CD8-positive, alpha-beta T cell (primary cell): ENCODE measurements at regions of chrX and their contacts with region 1.

Region 1: DNA sequence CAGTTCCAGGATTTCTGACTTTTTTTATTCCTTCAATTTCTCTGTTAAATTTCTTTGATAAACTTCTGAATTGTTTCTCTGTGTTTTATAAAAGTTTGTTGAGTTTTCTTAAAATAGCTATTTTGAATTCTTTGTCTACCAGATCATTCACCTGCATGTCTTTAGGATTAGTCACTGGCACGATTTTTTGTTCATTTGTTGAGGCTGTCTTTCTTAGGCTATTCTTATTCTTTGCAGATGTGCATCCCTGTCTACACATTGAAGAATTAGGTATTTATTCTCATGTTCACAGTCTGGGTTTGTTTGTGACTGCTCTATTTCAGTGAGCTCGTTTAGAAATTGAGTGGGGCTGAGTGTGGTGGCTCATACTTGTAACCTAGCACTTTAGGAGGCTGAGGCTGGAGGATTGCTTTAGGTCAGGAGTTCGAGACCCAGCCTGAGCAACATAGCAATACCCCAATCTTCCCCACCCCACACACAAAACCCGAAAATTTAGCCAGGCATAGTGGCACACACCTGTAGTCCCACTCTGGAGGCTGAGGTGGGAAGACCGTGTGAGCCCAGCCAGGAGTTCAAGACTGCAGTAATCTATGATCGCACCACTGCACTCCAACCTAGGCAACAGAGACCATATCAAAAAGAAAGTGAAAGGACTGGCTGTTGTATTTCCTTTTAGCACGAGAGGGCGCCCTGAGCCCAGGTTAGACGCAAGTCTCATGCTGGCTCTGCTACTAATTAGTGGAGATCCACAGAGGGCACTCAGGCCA is 42.0 kb downstream of the F8 start:
- DNase-seq: peak; percentile 59 to 85 (median 76)
- ATAC-seq: peak; percentile 99
- H3K4me3 ChIP-seq: peak overlapping the region; percentile 43 to 46
- H3K4me3 Mint-ChIP-seq: peak overlapping the region; percentile 83
- H3K27ac ChIP-seq: peak overlapping the region; percentile 21 to 56
- H3K27ac Mint-ChIP-seq: peak overlapping the region; percentile 39
- H3K4me1 ChIP-seq: peaks cover 4% of the 10 kb centered on the region
- H3K4me1 Mint-ChIP-seq: peaks cover 3% of the 10 kb centered on the region
- H3K27me3 ChIP-seq: no peaks in the 10 kb centered on the region
- H3K27me3 Mint-ChIP-seq: no peaks in the 10 kb centered on the region
- CTCF ChIP-seq: peak; percentile 56

Region 2: GRCh38 chrX:155056877-155057792 is 76.6 kb after region 1 on chrX:
- CTCF ChIA-PET with region 1: interaction called, 25 read pairs
- POLR2A ChIA-PET with region 1: no interaction called
- intact Hi-C with region 1: loop called (anchors 1 kb)
- DNase-seq: peak; percentile 4 to 75 (median 40)
- ATAC-seq: peak; percentile 86
- H3K4me3 ChIP-seq: peak overlapping the region; percentile 20 to 31
- H3K4me3 Mint-ChIP-seq: peak overlapping the region; percentile 74
- H3K27ac ChIP-seq: peak overlapping the region in 1 of 2 experiments; percentile 36
- H3K27ac Mint-ChIP-seq: peak overlapping the region; percentile 62
- H3K4me1 ChIP-seq: peaks cover 12% of the 10 kb centered on the region
- H3K4me1 Mint-ChIP-seq: peaks cover 16% of the 10 kb centered on the region
- H3K27me3 ChIP-seq: no peaks in the 10 kb centered on the region
- H3K27me3 Mint-ChIP-seq: no peaks in the 10 kb centered on the region
- CTCF ChIP-seq: peak; percentile 64

Region 3: DNA sequence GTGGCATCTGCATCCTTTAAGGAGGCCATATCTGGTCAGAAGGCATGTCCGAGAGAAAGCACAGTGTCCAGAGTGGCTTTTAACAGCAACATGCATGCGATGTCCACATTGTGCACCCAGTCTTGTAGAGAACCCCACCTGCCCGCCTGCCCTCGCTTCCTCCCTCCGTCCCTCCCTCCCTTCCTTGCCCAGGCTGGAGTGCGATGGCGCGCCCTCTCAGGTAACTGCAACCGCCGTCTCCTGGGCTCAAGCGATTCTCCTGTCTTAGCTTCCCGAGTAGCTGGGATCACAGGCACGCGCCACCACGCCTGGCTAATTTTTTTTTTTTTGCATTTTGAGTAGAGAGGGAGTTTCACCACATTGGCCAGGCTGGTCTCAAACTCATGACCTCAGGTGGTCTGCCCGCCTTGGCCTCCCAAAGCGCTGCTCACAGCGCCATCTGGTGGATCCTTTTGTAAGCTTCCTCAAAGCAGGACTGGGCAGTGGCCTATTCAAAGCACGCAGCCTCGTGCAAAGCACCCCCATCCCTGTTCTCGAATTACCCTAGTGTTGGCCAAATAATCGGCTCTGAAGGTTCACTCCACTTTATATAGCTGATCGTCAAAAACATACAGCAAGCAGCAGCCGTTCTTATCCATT is 105.8 kb after region 1 on chrX:
- CTCF ChIA-PET with region 1: interaction called, 6 read pairs
- POLR2A ChIA-PET with region 1: no interaction called
- intact Hi-C with region 1: loop called (anchors 1 kb)
- DNase-seq: peak in 7 of 9 experiments; percentile 20 to 61 (median 34)
- ATAC-seq: peak; percentile 36
- H3K4me3 ChIP-seq: no peak overlapping the region
- H3K4me3 Mint-ChIP-seq: no peak overlapping the region
- H3K27ac ChIP-seq: no peak overlapping the region
- H3K27ac Mint-ChIP-seq: no peak overlapping the region
- H3K4me1 ChIP-seq: no peaks in the 10 kb centered on the region
- H3K4me1 Mint-ChIP-seq: peaks cover 2% of the 10 kb centered on the region
- H3K27me3 ChIP-seq: no peaks in the 10 kb centered on the region
- H3K27me3 Mint-ChIP-seq: no peaks in the 10 kb centered on the region
- CTCF ChIP-seq: peak; percentile 31

Region 4: DNA sequence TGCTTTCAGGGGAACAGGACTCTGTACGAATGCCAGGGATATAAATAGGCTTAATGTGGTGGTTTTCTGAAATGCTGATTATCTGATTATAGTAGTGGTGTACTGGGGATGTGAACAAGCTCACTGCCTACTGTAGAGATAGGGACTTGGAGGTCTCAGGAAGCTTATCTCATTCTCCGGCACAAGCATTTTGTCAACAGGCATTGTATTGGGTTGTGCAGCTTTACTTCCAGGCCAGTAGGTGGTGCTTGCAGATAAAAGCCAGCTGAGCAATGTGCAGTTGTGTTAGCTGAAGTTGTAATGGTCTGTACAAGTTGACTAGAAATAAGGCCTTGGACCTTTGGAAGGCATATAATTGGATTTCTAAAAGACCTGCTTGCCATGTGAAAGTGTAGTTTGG is 681.8 kb after region 1 on chrX:
- CTCF ChIA-PET with region 1: no interaction called
- POLR2A ChIA-PET with region 1: no interaction called
- intact Hi-C with region 1: loop called in 1 of 2 experiments (anchors 10 kb)
- DNase-seq: no peak
- ATAC-seq: no peak
- H3K4me3 ChIP-seq: no peak overlapping the region
- H3K4me3 Mint-ChIP-seq: no peak overlapping the region
- H3K27ac ChIP-seq: no peak overlapping the region
- H3K27ac Mint-ChIP-seq: no peak overlapping the region
- H3K4me1 ChIP-seq: no peaks in the 10 kb centered on the region
- H3K4me1 Mint-ChIP-seq: no peaks in the 10 kb centered on the region
- H3K27me3 ChIP-seq: no peaks in the 10 kb centered on the region
- H3K27me3 Mint-ChIP-seq: no peaks in the 10 kb centered on the region
- CTCF ChIP-seq: no peak